ENCODE measurements at regions of chr1 and their contacts with region 1.

Region 1: GRCh38 chr1:53278201-53278725 is 39.9 kb upstream of the MAGOH start:
- DNase-seq: peak; percentile 89
- H3K4me3 ChIP-seq: no peak overlapping the region; a peak in 1 of 4 replicates
- H3K27ac ChIP-seq: no peak overlapping the region
- H3K4me1 ChIP-seq: peaks cover 0 to 10% of the 10 kb centered on the region in 2 experiments; a peak in 1 of 4 replicates
- H3K27me3 ChIP-seq: no peaks in the 10 kb centered on the region
- CTCF ChIP-seq: peak; percentile 93
- EP300 ChIP-seq: no peak
- RAD21 ChIP-seq: peak; percentile 95

Region 2: GRCh38 chr1:53260631-53261247 is 17.5 kb before region 1 on chr1:
- CTCF ChIA-PET with region 1: interaction called, 35 read pairs
- POLR2A ChIA-PET with region 1: no interaction called
- DNase-seq: no peak
- H3K4me3 ChIP-seq: no peak overlapping the region
- H3K27ac ChIP-seq: no peak overlapping the region
- H3K4me1 ChIP-seq: peaks cover 0 to 11% of the 10 kb centered on the region in 2 experiments; a peak in 1 of 4 replicates
- H3K27me3 ChIP-seq: no peaks in the 10 kb centered on the region
- CTCF ChIP-seq: no peak
- EP300 ChIP-seq: no peak
- RAD21 ChIP-seq: no peak

Region 3: GRCh38 chr1:53294567-53294966 is 16.3 kb after region 1 on chr1:
- CTCF ChIA-PET with region 1: interaction called, 82 read pairs
- POLR2A ChIA-PET with region 1: no interaction called
- DNase-seq: no peak
- H3K4me3 ChIP-seq: no peak overlapping the region
- H3K27ac ChIP-seq: no peak overlapping the region; a peak in 1 of 4 replicates
- H3K4me1 ChIP-seq: peaks cover 4 to 64% of the 10 kb centered on the region in 2 experiments; a peak in 3 of 4 replicates
- H3K27me3 ChIP-seq: no peaks in the 10 kb centered on the region
- CTCF ChIP-seq: no peak
- EP300 ChIP-seq: no peak
- RAD21 ChIP-seq: no peak

Region 4: DNA sequence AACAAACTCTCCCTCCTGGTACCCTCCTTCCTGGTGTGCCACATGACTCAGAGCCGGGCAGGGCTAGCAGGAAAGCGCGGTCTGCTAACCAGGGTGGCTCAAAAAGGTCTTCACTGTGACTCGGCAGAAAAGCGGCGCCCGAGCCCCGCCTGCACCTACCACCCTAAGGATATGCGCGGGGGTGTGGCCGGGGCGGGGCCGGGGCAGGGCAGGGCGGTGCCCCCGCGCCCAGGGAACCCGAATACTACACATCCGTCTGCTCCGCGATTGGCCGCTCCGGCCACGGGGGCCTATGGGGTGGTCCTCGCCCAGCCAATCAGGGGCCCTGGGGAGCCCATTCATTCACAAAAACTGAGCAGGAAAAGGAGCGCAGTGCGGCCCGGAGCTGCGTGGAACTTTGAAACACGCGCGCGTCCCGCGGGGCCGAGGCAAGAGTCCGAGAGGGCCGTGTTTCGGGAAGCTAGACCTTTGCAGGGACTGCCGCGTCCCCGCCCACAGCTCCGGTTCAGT is 47.9 kb after region 1 on chr1:
- CTCF ChIA-PET with region 1: interaction called, 12 read pairs
- POLR2A ChIA-PET with region 1: no interaction called
- DNase-seq: peak; percentile 96
- H3K4me3 ChIP-seq: peak overlapping the region; percentile 76 to 96
- H3K27ac ChIP-seq: peak overlapping the region; percentile 72 to 81
- H3K4me1 ChIP-seq: peaks cover 0 to 29% of the 10 kb centered on the region in 2 experiments; a peak in 2 of 4 replicates
- H3K27me3 ChIP-seq: no peaks in the 10 kb centered on the region
- CTCF ChIP-seq: no peak
- EP300 ChIP-seq: no peak
- RAD21 ChIP-seq: no peak; the same call in 1 of the 2 replicates

Region 5: DNA sequence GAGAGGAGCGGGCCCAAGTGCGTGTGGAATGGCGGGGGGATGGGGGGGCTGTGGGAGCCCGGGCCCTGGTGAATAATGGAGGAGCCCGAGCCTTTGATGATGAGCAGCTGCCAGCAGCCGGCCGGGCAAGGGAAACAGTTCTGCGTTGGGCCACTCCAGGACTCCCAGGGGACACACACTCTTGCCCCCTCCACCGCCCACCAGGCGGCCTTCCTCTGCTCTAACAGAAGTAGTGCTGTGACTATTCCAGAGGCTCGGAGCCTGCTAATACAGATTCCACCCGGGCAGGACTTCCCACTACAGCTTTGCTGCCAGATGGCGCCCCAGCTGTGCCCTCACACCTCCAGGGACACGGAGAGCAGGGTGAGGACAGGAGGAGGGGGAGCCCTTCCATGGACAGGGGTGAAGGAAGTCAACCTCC is 97.8 kb after region 1 on chr1:
- CTCF ChIA-PET with region 1: interaction called, 39 read pairs
- POLR2A ChIA-PET with region 1: no interaction called
- DNase-seq: peak; percentile 56
- H3K4me3 ChIP-seq: no peak overlapping the region
- H3K27ac ChIP-seq: no peak overlapping the region
- H3K4me1 ChIP-seq: peaks cover 0 to 13% of the 10 kb centered on the region in 2 experiments; a peak in 1 of 4 replicates
- H3K27me3 ChIP-seq: no peaks in the 10 kb centered on the region
- CTCF ChIP-seq: no peak
- EP300 ChIP-seq: no peak
- RAD21 ChIP-seq: no peak

Region 6: DNA sequence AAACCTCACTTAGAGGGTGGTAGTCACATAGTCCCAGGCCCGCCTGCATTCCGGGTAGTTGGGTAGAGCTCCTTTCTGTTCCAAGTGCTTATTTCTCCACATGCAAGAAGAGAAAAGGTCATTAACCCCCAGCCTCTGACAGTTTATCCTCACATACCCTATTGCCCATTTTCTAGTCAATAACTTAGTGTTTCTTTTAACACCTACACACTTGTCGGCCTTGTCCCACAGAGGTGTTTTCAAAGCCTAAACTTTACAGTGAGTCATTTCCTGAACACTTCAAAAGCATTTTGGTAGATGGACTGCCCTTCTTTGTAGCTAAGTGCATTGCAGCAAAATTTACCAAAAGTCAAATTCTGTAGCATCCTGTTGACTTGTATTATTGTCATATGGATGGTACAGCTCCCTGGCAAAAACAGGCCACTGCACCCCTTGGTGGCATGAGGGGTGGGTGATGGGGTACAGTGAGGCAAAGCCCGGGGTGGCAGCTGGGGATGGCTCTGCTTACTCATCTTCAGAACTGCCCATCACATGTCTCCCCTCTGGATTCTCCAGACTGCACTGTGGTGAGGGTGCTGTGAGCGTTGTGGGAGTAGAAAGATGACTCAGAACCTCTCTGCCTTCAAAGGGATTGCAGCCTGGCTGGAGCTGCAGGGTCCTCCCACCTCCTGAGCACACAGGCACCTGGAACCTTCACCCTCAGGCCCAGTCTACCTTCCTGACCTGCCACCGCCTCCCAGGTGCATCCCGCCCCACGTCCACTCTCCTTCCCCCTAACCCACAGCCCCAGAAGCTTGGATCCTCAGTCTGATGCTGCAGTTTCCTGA is 135.1 kb after region 1 on chr1:
- CTCF ChIA-PET with region 1: interaction called, 19 read pairs
- POLR2A ChIA-PET with region 1: no interaction called
- DNase-seq: no peak
- H3K4me3 ChIP-seq: no peak overlapping the region
- H3K27ac ChIP-seq: peak overlapping the region in 1 of 2 experiments; percentile 56; a peak in 2 of 4 replicates
- H3K4me1 ChIP-seq: peaks cover 17 to 41% of the 10 kb centered on the region in 2 experiments; a peak in 3 of 4 replicates
- H3K27me3 ChIP-seq: no peaks in the 10 kb centered on the region; the same call in 1 of the 2 replicates
- CTCF ChIP-seq: no peak
- EP300 ChIP-seq: no peak
- RAD21 ChIP-seq: no peak

Measured in SK-N-SH (cell line).